Activated CD8-positive, alpha-beta T cell treated with anti-CD3 and anti-CD28 coated beads for 36 hours (primary cell): ENCODE measurements at regions of chr1 and their contacts with region 1.

Region 1: GRCh38 chr1:205255941-205256780 is 28.4 kb downstream of the TMCC2 start:
- DNase-seq: peak; percentile 93
- ATAC-seq: peak; percentile 97
- H3K4me3 Mint-ChIP-seq: no peak overlapping the region
- H3K27ac Mint-ChIP-seq: no peak overlapping the region
- H3K4me1 Mint-ChIP-seq: peaks cover 9% of the 10 kb centered on the region
- H3K27me3 Mint-ChIP-seq: no peaks in the 10 kb centered on the region
- CTCF ChIP-seq: peak; percentile 97

Region 2: GRCh38 chr1:204975570-204976235 is 280.5 kb before region 1 on chr1:
- CTCF ChIA-PET with region 1: interaction called, 14 read pairs
- POLR2A ChIA-PET with region 1: no interaction called
- intact Hi-C with region 1: loop called (anchors 5 kb)
- DNase-seq: peak; percentile 67
- ATAC-seq: peak; percentile 88
- H3K4me3 Mint-ChIP-seq: no peak overlapping the region
- H3K27ac Mint-ChIP-seq: no peak overlapping the region
- H3K4me1 Mint-ChIP-seq: peaks cover 1% of the 10 kb centered on the region
- H3K27me3 Mint-ChIP-seq: peaks cover 10% of the 10 kb centered on the region
- CTCF ChIP-seq: peak; percentile 83

Region 3: GRCh38 chr1:205091043-205091740 is 165.0 kb before region 1 on chr1:
- CTCF ChIA-PET with region 1: interaction called, 11 read pairs
- POLR2A ChIA-PET with region 1: no interaction called
- intact Hi-C with region 1: no loop called
- DNase-seq: no peak
- ATAC-seq: no peak
- H3K4me3 Mint-ChIP-seq: no peak overlapping the region
- H3K27ac Mint-ChIP-seq: peak overlapping the region; percentile 21
- H3K4me1 Mint-ChIP-seq: no peaks in the 10 kb centered on the region
- H3K27me3 Mint-ChIP-seq: no peaks in the 10 kb centered on the region
- CTCF ChIP-seq: no peak

Region 4: GRCh38 chr1:205141236-205142101 is 114.7 kb before region 1 on chr1:
- CTCF ChIA-PET with region 1: interaction called, 15 read pairs
- POLR2A ChIA-PET with region 1: no interaction called
- intact Hi-C with region 1: no loop called
- DNase-seq: peak; percentile 92
- ATAC-seq: peak; percentile 94
- H3K4me3 Mint-ChIP-seq: no peak overlapping the region
- H3K27ac Mint-ChIP-seq: no peak overlapping the region
- H3K4me1 Mint-ChIP-seq: peaks cover 5% of the 10 kb centered on the region
- H3K27me3 Mint-ChIP-seq: no peaks in the 10 kb centered on the region
- CTCF ChIP-seq: peak; percentile 79

Region 5: GRCh38 chr1:205199090-205199930 is 56.9 kb before region 1 on chr1:
- CTCF ChIA-PET with region 1: interaction called, 11 read pairs
- POLR2A ChIA-PET with region 1: interaction called, 3 read pairs
- intact Hi-C with region 1: no loop called
- DNase-seq: peak; percentile 70
- ATAC-seq: peak; percentile 55
- H3K4me3 Mint-ChIP-seq: peak overlapping the region; percentile 53
- H3K27ac Mint-ChIP-seq: peak overlapping the region; percentile 94
- H3K4me1 Mint-ChIP-seq: peaks cover 69% of the 10 kb centered on the region
- H3K27me3 Mint-ChIP-seq: no peaks in the 10 kb centered on the region
- CTCF ChIP-seq: no peak

Region 6: GRCh38 chr1:205273551-205273982 is 17.4 kb after region 1 on chr1:
- CTCF ChIA-PET with region 1: interaction called, 59 read pairs
- POLR2A ChIA-PET with region 1: interaction called, 3 read pairs
- intact Hi-C with region 1: no loop called
- DNase-seq: peak; percentile 92
- ATAC-seq: peak; percentile 94
- H3K4me3 Mint-ChIP-seq: no peak overlapping the region
- H3K27ac Mint-ChIP-seq: no peak overlapping the region
- H3K4me1 Mint-ChIP-seq: peaks cover 33% of the 10 kb centered on the region
- H3K27me3 Mint-ChIP-seq: no peaks in the 10 kb centered on the region
- CTCF ChIP-seq: peak; percentile 99

Region 7: DNA sequence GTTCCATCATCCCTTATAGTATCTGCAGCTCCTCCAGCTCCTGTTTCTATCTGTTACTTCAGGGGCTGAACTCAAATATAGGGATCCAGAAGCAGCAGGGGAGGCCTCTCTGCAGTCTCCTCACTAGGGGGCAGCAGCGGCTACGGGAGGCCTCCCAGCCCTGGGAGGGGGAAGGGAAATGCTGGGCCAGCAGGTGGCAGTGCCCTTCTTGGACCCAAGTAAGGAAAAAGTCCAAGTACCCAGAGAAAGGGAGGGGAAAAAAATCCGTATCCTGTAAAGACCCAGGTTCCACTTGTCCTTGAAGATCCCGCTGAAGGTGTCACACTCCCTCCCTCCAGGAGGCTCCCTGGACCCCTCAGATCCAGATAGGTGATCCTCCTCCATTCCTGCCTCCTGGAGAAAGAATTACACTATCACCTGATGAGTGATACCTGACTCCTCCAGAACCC is 79.5 kb after region 1 on chr1:
- CTCF ChIA-PET with region 1: interaction called, 30 read pairs
- POLR2A ChIA-PET with region 1: interaction called, 3 read pairs
- intact Hi-C with region 1: no loop called
- DNase-seq: peak; percentile 84
- ATAC-seq: peak; percentile 92
- H3K4me3 Mint-ChIP-seq: no peak overlapping the region
- H3K27ac Mint-ChIP-seq: no peak overlapping the region
- H3K4me1 Mint-ChIP-seq: peaks cover 6% of the 10 kb centered on the region
- H3K27me3 Mint-ChIP-seq: peaks cover 6% of the 10 kb centered on the region
- CTCF ChIP-seq: peak; percentile 98